ENCODE measurements at regions of chr6 and their contacts with region 1.

Region 1: DNA sequence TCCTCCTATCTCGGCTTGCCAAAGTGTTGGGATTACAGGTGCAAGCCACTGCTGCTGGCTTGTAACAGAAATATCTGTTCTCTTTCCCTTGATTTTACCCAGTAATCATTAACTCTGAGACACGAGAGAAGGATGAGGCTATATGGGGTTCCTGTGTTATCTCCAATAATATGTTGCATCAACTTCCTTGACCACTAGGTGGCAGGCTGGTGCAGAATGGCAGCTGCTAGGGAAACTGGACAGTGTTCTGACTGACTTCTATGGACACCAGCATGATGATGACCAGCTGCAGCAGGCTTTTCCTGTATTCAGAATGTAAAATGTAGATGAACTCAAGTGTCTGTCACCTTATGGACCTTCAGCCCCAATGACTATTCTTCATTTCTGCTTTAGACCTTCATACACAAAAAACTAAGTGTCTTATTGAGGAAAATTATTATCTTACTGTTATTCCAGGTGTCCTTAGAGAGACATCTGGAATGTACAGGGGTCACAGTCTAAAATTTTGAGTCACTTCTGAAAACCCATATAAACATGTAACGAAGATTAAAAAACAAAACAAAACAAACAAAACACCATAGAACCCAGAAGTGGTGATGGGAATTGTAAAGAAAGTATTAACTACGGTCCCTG is 20.4 kb upstream of the CD109 start:
- DNase-seq: peak; percentile 76
- H3K4me3 Mint-ChIP-seq: no peak overlapping the region
- H3K27ac Mint-ChIP-seq: no peak overlapping the region
- H3K4me1 Mint-ChIP-seq: peaks cover 2% of the 10 kb centered on the region
- H3K27me3 Mint-ChIP-seq: peaks cover 8% of the 10 kb centered on the region

Region 2: GRCh38 chr6:73515204-73515655 is 160.4 kb before region 1 on chr6:
- CTCF ChIA-PET with region 1: no interaction called
- POLR2A ChIA-PET with region 1: no interaction called
- intact Hi-C with region 1: no loop called
- DNase-seq: peak; percentile 19
- H3K4me3 Mint-ChIP-seq: peak overlapping the region; percentile 98
- H3K27ac Mint-ChIP-seq: peak overlapping the region; percentile 87
- H3K4me1 Mint-ChIP-seq: peaks cover 46% of the 10 kb centered on the region
- H3K27me3 Mint-ChIP-seq: peaks cover 10% of the 10 kb centered on the region

Region 3: DNA sequence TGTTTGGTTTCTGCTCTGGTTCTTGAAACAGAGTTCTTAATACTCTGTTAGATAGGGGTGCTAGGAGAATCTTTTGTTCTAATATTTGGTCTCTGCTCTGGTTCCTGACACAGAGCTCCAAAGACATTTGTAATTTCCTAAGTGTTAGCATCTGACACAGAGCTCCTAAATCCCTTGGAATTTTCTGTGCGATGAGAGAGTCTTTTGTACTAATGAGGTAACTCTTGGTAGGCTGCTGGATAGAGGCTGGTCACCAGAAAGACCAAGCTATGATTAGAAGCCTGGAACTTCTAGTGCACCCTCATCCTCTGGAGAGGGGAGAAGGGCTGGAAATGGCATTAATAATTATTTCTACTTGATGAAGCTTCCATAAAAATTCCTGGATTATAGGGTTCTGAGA is 12.8 kb after region 1 on chr6:
- CTCF ChIA-PET with region 1: interaction called, 11 read pairs
- POLR2A ChIA-PET with region 1: no interaction called
- intact Hi-C with region 1: no loop called
- DNase-seq: no peak
- H3K4me3 Mint-ChIP-seq: no peak overlapping the region
- H3K27ac Mint-ChIP-seq: no peak overlapping the region
- H3K4me1 Mint-ChIP-seq: peaks cover 6% of the 10 kb centered on the region
- H3K27me3 Mint-ChIP-seq: peaks cover 20% of the 10 kb centered on the region

Region 4: DNA sequence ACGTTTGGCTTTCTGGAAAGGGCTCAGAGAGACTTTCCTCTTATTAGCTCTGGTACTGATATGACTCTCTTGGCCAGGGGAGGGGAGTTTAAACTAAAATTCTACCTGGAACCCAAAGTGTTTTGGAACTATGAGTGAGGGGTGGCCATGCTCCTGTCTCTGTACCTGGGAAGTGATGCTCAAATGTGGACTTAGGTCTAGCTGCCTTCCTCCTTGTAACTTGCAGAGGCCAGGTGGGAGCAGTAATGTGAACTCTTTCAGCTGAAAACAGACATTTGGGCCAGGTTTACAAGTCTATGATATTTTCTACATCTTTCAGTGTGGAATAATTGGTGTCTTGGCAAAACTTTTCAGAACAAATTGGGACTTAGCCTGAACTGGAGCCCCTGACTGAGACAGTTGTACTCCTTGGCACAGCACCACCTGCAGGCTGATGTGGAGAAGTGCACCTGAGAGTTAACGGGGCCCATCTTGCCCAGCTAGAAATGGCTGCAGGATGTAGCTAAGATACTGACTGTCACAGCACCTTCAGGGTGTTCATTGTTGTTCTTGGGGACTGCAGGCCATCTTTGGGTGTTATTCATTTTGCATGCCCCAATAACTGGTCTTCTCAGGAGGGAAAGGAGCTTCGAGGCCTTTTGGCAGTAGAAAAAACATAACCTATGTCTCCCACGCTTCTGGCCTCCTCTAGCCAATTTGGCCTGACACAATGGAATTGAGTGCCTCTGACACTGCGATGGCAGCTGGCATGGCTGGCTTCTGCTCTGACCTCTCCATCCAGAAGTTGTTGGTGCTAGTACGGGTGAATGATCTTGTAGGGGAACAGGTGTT is 57.5 kb after region 1 on chr6:
- CTCF ChIA-PET with region 1: interaction called, 174 read pairs
- POLR2A ChIA-PET with region 1: no interaction called
- intact Hi-C with region 1: loop called (anchors 1 kb)
- DNase-seq: peak; percentile 81
- H3K4me3 Mint-ChIP-seq: no peak overlapping the region
- H3K27ac Mint-ChIP-seq: no peak overlapping the region
- H3K4me1 Mint-ChIP-seq: peaks cover 10% of the 10 kb centered on the region
- H3K27me3 Mint-ChIP-seq: no peaks in the 10 kb centered on the region

Region 5: GRCh38 chr6:73739096-73739495 is 63.5 kb after region 1 on chr6:
- CTCF ChIA-PET with region 1: interaction called, 174 read pairs
- POLR2A ChIA-PET with region 1: no interaction called
- intact Hi-C with region 1: no loop called
- DNase-seq: no peak
- H3K4me3 Mint-ChIP-seq: no peak overlapping the region
- H3K27ac Mint-ChIP-seq: no peak overlapping the region
- H3K4me1 Mint-ChIP-seq: no peaks in the 10 kb centered on the region
- H3K27me3 Mint-ChIP-seq: no peaks in the 10 kb centered on the region

Region 6: GRCh38 chr6:73854998-73855718 is 179.6 kb after region 1 on chr6:
- CTCF ChIA-PET with region 1: interaction called, 3 read pairs
- POLR2A ChIA-PET with region 1: no interaction called
- intact Hi-C with region 1: loop called (anchors 10 kb)
- DNase-seq: no peak
- H3K4me3 Mint-ChIP-seq: no peak overlapping the region
- H3K27ac Mint-ChIP-seq: no peak overlapping the region
- H3K4me1 Mint-ChIP-seq: no peaks in the 10 kb centered on the region
- H3K27me3 Mint-ChIP-seq: no peaks in the 10 kb centered on the region

Measured in activated CD4-positive, alpha-beta memory T cell treated with anti-CD3 and anti-CD28 coated beads for 36 hours (primary cell).